ENCODE measurements at regions of chrX and their contacts with region 1.

Region 1: DNA sequence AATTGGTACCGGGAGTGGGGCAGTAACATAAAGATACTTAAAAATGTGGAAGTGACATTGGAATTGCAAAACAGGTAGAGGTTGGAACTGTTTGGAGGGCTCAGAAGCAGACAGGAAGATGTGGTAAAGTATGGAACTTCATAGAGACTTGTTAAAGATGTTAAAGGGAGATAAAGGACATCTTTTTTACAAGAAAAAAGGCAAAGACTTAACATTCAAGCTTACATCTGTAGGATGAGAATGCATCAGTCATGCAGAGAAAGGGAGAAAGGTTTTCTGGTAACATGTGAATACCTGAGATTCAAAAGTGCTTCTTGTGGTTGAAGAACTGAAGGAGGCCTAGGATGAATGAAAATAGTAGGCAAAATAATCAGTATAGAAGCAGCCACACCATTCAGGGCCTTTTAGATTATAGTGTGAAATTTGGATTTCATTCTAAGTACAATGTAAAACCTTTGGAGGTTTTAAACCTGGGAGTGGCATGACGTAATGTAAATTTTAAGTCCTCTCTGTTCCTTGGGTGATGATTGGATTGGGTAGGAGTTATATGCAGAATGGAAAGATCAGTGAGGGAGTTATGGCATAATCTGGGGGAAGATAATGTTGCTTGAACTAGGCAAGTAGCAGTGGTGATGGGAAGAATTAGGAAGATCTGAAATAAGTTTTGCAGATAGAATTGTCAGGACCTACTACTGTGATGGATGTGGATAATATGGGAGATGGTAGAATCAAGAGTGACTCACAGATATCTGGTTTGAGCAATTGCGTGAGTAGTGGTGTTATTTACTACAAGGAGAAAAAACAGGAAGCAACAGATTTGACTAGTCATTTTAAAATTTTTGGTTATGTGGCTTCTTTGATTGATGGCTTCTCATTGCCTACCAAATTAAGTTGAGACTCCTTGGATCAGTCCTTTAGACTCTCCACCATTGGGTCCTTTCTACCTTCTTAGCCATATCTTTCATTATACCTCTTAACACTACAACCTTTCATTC is 138.7 kb downstream of the VSIG4 start:
- DNase-seq: no peak
- ATAC-seq: peak; percentile 30
- H3K4me3 Mint-ChIP-seq: no peak overlapping the region
- H3K27ac Mint-ChIP-seq: no peak overlapping the region
- H3K4me1 Mint-ChIP-seq: peaks cover 17% of the 10 kb centered on the region
- H3K27me3 Mint-ChIP-seq: no peaks in the 10 kb centered on the region

Region 2: GRCh38 chrX:65841263-65841662 is 59.9 kb before region 1 on chrX:
- CTCF ChIA-PET with region 1: no interaction called
- POLR2A ChIA-PET with region 1: no interaction called
- intact Hi-C with region 1: loop called in 1 of 2 experiments (anchors 10 kb)
- DNase-seq: no peak
- ATAC-seq: no peak
- H3K4me3 Mint-ChIP-seq: no peak overlapping the region
- H3K27ac Mint-ChIP-seq: no peak overlapping the region
- H3K4me1 Mint-ChIP-seq: peaks cover 4% of the 10 kb centered on the region
- H3K27me3 Mint-ChIP-seq: no peaks in the 10 kb centered on the region

Region 3: GRCh38 chrX:65961714-65962113 is 60.6 kb after region 1 on chrX:
- CTCF ChIA-PET with region 1: no interaction called
- POLR2A ChIA-PET with region 1: no interaction called
- intact Hi-C with region 1: loop called in 1 of 2 experiments (anchors 10 kb)
- DNase-seq: no peak
- ATAC-seq: no peak
- H3K4me3 Mint-ChIP-seq: no peak overlapping the region
- H3K27ac Mint-ChIP-seq: no peak overlapping the region
- H3K4me1 Mint-ChIP-seq: no peaks in the 10 kb centered on the region
- H3K27me3 Mint-ChIP-seq: no peaks in the 10 kb centered on the region